ENCODE measurements at regions of chr5 and their contacts with region 1.

Region 1: DNA sequence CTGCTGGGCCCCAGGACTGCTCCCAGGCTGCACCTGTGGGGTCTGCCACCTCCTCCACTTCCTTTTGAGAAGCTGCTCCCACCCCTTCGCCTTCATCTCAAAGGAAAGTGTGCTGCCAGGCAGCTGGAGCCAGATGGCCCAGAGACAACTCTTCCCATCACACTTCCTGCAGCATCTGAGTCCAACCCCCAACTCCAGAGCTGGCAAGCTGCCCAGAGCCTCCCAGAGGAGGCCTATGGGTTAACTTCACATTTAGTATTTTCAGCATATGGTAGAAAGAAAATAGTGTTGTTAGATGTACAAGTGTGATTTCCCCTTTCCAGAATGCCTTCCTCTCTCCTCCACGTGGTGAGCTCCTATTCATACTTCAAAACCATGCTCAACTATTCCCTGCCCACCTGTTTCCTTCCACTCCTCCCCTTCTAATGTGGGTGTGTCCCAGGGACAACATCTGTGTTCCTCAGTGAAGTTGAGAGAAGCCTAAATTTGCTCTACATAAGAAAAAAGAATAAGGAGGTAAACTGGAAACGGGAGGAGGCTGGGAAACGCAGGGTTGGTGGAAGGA is 38.6 kb upstream of the KCNMB1 start:
- DNase-seq: peak in 2 of 3 donors; percentile 24 to 27
- H3K4me3 ChIP-seq: no peak overlapping the region
- H3K27ac ChIP-seq: no peak overlapping the region
- H3K4me1 ChIP-seq: peaks cover 0 to 34% (median 16%) of the 10 kb centered on the region in 4 experiments
- H3K27me3 ChIP-seq: no peaks in the 10 kb centered on the region

Region 2: DNA sequence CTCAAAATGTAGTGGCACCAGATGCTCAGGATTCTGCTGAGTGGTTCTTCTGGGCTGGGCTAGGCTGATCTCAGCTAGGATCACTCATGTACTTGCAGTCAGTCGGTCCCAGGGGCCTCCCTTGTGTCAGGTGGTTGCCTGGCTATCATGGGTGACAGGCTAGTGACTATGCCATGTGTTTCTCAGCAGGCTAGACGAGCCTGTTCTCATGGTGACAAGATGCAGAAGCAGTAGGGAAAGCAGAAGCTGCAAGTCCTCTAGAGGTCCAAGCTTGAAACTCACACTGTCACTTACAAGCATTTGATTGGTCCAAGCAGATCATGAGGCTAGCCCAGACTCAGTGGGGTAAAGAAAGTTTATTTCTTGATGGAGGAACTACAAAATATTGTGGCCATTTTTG is 23.4 kb before region 1 on chr5:
- CTCF ChIA-PET with region 1: interaction called, 16 read pairs
- POLR2A ChIA-PET with region 1: no interaction called
- DNase-seq: peak; percentile 41 to 88 (median 79)
- H3K4me3 ChIP-seq: no peak overlapping the region
- H3K27ac ChIP-seq: no peak overlapping the region
- H3K4me1 ChIP-seq: peaks cover 5 to 25% (median 20%) of the 10 kb centered on the region in 4 experiments
- H3K27me3 ChIP-seq: no peaks in the 10 kb centered on the region